ENCODE measurements at regions of chr19 and their contacts with region 1.

Region 1: DNA sequence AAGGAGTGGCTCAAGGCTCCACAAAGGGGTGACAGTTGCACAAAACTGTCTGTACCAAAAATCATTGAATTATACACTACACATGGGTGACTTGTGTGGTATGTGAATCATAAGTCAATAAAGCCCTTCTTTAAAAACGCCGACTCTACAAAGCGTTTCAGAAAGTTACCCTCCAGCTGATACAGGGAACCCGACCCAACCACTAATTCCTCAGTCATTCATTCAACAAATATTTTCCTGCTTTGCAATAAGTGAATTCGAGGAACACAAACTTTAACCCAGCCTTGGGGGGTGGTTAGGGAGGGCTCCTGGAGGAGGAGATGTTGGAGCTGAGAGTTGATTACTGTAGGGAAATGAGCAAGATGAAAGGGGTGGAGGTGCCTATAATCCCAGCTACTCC is 32.0 kb downstream of the LTBP4 start:
- DNase-seq: no peak
- H3K4me3 Mint-ChIP-seq: no peak overlapping the region
- H3K27ac Mint-ChIP-seq: no peak overlapping the region
- H3K4me1 Mint-ChIP-seq: peaks cover 7% of the 10 kb centered on the region
- H3K27me3 Mint-ChIP-seq: peaks cover 5% of the 10 kb centered on the region

Region 2: DNA sequence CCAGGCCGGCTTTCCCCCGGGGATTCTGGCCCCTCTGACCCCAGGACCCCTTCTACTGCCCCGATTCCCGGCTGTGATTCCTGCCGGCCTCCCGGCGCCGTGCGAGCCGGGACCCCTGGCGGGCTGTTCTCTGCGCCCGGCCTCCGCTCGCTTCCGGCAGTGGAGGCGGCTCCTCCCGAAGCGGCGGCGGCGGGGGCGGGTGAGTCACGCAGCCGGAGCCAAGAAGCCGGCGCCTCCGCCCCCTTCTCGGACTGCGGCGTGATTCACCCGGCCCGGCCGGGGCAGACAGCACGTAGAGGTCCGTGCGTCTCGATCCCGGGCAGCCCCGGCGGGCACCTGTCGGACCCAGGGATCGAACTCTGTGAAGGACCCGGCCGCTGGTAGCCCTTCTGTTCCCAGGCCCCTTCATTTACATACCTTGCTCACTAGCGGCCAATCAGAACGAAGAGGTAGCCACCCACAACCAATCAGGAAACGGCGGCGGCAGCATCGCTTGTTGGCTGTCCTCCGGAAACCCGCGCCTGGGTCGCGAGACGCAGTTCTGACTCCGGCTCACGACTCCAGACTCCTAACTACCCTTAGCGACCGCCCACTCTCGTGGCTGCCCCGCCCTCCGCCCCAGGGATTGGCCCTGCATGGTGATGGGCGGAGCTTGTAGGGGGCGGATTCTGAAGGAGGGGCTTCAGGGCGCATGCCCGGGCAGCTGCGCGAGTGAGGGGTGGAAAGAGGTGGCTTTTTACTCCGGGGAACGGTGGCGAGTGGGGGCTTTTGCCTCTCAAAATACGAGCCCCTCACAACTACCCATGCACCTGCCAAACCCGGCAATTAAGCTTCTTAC is 207.5 kb before region 1 on chr19 and contains the start of gene SERTAD1:
- CTCF ChIA-PET with region 1: interaction called, 13 read pairs
- POLR2A ChIA-PET with region 1: no interaction called
- intact Hi-C with region 1: no loop called
- DNase-seq: peak; percentile 100
- H3K4me3 Mint-ChIP-seq: peak within 1 kb of the TSS; percentile 81
- H3K27ac Mint-ChIP-seq: peak within 1 kb of the TSS; percentile 88
- H3K4me1 Mint-ChIP-seq: peaks cover 17% of the 10 kb centered on the region
- H3K27me3 Mint-ChIP-seq: no peaks in the 10 kb centered on the region
- total RNA-seq, gene SERTAD1: 11.5 to 12.6 TPM

Region 3: DNA sequence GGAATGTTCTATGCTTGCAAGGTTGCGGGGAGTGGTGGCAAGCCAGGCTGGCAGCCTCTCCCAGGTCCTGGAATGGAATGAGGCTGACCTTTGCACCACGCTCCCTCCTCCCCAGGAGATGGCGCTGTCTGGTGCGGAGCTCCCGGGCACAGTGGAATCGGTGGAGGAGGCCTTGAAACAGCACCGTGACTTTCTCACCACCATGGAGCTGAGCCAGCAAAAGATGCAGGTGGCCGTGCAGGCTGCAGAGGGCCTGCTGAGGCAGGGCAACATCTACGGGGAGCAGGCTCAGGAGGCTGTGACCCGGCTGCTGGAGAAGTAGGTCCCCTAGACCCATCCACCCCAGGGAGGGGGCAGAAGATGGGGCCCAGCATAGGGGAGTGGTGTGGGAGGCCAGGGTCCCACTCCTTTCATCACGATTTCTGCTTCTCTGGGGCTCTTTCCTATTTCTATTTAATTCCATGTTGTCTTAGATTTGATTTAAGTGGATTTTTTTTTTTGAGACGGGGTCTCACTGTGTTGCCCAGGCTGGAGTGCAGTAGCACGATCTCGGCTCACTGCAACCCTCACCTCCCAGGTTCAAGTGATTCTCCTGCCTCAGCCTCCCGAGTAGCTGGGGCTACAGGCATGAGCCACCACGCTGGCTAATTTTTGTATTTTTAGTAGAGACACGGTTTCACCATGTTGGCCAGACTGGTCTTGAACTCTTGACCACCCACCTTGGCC is 109.7 kb before region 1 on chr19:
- CTCF ChIA-PET with region 1: interaction called, 19 read pairs
- POLR2A ChIA-PET with region 1: no interaction called
- intact Hi-C with region 1: loop called (anchors 2 kb)
- DNase-seq: peak; percentile 77
- H3K4me3 Mint-ChIP-seq: no peak overlapping the region
- H3K27ac Mint-ChIP-seq: no peak overlapping the region
- H3K4me1 Mint-ChIP-seq: peaks cover 3% of the 10 kb centered on the region
- H3K27me3 Mint-ChIP-seq: peaks cover 14% of the 10 kb centered on the region

Region 4: DNA sequence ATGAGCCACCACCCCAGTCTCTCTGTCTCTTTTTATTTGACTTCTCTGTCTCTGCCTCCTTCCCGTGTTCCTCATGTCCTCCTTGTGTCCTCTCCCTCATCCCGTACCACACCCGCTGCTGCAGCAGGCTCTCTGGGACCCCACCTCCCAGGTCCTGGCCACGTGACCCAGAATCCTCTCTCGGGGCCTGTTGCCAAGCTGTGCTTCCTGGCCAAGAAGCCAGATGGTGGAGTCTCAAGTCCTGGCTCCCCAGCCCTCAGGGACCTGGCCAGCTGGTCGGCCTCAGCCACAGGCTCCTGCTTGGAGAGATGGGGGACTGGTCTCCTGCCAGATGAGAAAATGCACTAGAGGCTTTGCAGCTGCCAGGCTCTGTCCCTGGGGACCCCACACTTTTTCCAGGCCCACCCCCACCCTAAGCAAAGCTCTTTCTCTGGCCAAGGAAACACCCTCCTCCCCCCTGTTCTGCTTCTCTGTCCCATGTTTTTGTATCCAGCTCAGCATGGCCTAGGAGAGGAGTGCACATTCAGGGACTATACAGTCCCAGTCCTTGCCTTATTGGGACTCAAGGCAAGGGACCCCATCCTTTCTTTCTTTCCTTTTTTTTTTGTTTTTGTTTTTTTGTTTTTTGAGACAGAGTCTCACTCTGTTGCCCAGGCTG is 90.9 kb before region 1 on chr19:
- CTCF ChIA-PET with region 1: interaction called, 14 read pairs
- POLR2A ChIA-PET with region 1: no interaction called
- intact Hi-C with region 1: no loop called
- DNase-seq: no peak
- H3K4me3 Mint-ChIP-seq: no peak overlapping the region
- H3K27ac Mint-ChIP-seq: no peak overlapping the region
- H3K4me1 Mint-ChIP-seq: no peaks in the 10 kb centered on the region
- H3K27me3 Mint-ChIP-seq: peaks cover 10% of the 10 kb centered on the region

Region 5: DNA sequence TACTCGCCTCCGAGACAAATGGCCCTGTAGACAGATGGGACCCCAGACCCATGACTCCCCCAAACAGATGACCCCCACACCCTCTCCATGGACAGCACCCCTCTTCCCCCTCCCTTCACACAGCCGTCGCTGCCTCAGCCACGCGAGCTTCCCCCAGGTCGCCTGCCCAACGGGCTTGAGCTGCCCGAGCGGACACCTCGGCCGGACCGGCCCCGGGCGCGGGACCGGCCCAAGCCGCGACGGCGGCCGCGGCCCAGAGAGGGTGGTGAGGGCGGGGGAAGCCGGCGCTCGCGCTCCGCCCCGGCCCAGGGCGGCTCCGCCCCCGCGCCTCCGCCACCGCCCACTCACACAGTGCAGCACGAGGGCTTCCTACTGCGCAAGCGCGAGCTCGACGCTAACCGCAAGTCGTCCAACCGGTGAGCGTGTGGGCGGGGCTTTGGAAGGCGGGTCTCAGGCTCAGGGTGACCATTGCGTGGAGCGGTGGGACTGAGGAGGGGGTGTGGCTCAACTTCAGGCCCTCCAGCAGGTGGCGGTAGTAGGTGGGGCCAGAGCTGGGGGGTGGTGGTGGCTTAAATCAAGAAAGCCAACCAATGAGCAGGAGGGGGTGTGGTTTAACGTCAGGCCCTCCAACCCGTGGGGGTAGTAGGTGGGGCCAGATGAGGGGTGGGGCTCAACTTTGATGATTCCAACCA is 62.7 kb before region 1 on chr19:
- CTCF ChIA-PET with region 1: interaction called, 11 read pairs
- POLR2A ChIA-PET with region 1: no interaction called
- intact Hi-C with region 1: no loop called
- DNase-seq: peak; percentile 98
- H3K4me3 Mint-ChIP-seq: peak overlapping the region; percentile 67
- H3K27ac Mint-ChIP-seq: peak overlapping the region; percentile 61
- H3K4me1 Mint-ChIP-seq: peaks cover 16% of the 10 kb centered on the region
- H3K27me3 Mint-ChIP-seq: peaks cover 17% of the 10 kb centered on the region

Region 6: DNA sequence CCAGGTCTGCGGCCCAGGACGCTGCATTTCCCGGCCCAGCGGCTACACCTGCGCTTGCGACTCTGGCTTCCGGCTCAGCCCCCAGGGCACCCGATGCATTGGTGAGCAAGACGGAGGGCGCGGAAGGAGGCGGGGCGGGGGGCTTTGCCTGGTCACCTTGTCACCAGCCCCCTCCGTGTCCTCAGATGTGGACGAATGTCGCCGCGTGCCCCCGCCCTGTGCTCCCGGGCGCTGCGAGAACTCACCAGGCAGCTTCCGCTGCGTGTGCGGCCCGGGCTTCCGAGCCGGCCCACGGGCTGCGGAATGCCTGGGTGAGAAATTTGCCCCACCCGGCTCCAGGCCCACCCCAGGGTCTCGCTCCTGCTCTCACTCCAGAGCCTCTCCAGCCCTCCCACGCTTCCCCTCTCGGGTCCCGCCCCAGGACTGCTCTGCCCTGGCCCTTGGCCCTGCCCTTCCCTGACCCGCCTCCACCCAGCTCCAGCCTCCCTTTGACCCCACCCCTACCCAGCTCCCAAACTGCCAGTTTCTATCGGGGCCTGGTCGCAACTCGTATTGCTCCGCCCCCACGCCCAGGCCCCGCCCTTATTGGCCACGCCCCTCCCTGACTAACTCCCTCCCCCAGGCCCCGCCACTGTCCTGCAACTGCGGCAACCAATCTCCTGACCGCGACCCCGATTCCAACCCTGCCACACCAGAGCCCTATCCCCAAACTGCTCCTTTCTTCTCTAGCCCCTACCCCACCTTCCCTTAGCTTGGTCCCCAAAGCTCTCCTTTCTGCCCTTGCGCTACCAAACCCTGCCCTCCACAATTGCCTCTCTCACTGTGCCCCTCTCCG is 23.4 kb before region 1 on chr19:
- CTCF ChIA-PET with region 1: interaction called, 41 read pairs
- POLR2A ChIA-PET with region 1: no interaction called
- intact Hi-C with region 1: loop called (anchors 2 kb)
- DNase-seq: peak; percentile 97
- H3K4me3 Mint-ChIP-seq: peak overlapping the region; percentile 72
- H3K27ac Mint-ChIP-seq: peak overlapping the region; percentile 84
- H3K4me1 Mint-ChIP-seq: peaks cover 61% of the 10 kb centered on the region
- H3K27me3 Mint-ChIP-seq: no peaks in the 10 kb centered on the region

Region 7: DNA sequence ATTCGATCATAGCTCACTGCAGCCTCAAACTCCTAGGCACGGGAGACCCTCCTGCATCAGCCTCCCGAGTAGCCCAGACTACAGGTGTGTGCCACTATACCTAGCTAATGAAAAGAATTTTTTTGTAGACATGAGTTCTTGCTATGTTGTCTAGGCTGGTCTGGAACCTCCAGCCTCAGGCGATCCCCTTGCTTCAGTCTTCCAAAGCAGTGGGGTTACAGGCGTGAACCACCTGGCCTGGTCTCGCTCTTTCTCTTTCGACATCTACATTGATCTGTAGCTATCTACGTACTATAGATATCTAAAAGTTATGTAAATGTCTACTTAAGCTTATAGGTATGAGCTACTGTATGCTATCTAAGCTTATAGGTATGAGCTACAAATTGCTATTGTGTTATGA is 24.8 kb after region 1 on chr19:
- CTCF ChIA-PET with region 1: interaction called, 15 read pairs
- POLR2A ChIA-PET with region 1: no interaction called
- intact Hi-C with region 1: no loop called
- DNase-seq: no peak
- H3K4me3 Mint-ChIP-seq: no peak overlapping the region
- H3K27ac Mint-ChIP-seq: no peak overlapping the region
- H3K4me1 Mint-ChIP-seq: peaks cover 2% of the 10 kb centered on the region
- H3K27me3 Mint-ChIP-seq: no peaks in the 10 kb centered on the region